B cell (primary cell): ENCODE measurements at regions of chr19 and their contacts with region 1.

Region 1: GRCh38 chr19:45001087-45001739 is at the start of gene RELB:
- DNase-seq: peak; percentile 96
- ATAC-seq: peak; percentile 48
- H3K4me3 ChIP-seq: peak within 1 kb of the TSS in 4 of 5 experiments; percentile 75 to 95 (median 82)
- H3K4me3 Mint-ChIP-seq: peak within 1 kb of the TSS; percentile 96
- H3K27ac ChIP-seq: peak within 1 kb of the TSS; percentile 100
- H3K27ac Mint-ChIP-seq: peak within 1 kb of the TSS; percentile 97
- H3K4me1 ChIP-seq: peaks cover 13 to 15% of the 10 kb centered on the region in 2 donors
- H3K4me1 Mint-ChIP-seq: peaks cover 32% of the 10 kb centered on the region
- H3K27me3 ChIP-seq: no peaks in the 10 kb centered on the region
- H3K27me3 Mint-ChIP-seq: no peaks in the 10 kb centered on the region
- CTCF ChIP-seq: no peak
- total RNA-seq, gene RELB: 106 and 111 TPM in 2 replicates

Region 2: DNA sequence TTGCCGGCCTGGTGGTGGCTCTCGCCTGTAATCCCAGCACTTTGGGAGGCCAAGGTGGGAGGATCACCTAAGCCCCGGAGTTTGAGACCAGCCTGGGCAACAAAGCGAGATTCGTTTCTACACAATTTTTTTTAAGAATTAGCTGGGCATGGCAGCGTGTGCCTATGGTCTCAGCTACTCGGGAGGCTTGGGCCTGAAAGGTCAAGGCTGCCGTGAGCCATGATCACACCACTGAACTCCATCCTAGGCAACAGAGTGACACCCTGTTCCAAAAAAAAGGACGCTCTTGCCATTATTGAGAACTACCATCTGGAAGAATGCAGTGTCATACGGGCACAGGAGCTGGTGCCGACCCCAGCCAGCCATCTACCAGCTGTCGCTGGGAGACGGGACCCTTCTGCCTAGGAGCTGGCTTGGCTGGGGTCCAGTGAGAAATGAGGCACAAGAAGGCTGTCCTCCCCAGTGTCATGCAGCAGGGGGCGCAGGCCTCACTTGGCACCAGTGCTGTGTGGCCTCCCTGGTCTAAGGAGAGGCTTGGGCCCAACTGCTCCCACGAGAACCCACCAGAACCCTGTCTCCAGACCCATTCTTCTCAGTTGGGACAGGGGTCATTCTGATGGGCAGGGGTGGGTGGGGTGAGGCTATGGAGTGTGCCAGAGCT is 12.2 kb before region 1 on chr19:
- CTCF ChIA-PET with region 1: interaction called, 7 read pairs
- POLR2A ChIA-PET with region 1: interaction called, 10 read pairs
- intact Hi-C with region 1: no loop called
- DNase-seq: peak; percentile 78
- ATAC-seq: peak; percentile 86
- H3K4me3 ChIP-seq: no peak overlapping the region
- H3K4me3 Mint-ChIP-seq: no peak overlapping the region
- H3K27ac ChIP-seq: no peak overlapping the region
- H3K27ac Mint-ChIP-seq: peak overlapping the region; percentile 65
- H3K4me1 ChIP-seq: no peaks in the 10 kb centered on the region
- H3K4me1 Mint-ChIP-seq: peaks cover 4% of the 10 kb centered on the region
- H3K27me3 ChIP-seq: no peaks in the 10 kb centered on the region
- H3K27me3 Mint-ChIP-seq: no peaks in the 10 kb centered on the region
- CTCF ChIP-seq: peak; percentile 73

Region 3: DNA sequence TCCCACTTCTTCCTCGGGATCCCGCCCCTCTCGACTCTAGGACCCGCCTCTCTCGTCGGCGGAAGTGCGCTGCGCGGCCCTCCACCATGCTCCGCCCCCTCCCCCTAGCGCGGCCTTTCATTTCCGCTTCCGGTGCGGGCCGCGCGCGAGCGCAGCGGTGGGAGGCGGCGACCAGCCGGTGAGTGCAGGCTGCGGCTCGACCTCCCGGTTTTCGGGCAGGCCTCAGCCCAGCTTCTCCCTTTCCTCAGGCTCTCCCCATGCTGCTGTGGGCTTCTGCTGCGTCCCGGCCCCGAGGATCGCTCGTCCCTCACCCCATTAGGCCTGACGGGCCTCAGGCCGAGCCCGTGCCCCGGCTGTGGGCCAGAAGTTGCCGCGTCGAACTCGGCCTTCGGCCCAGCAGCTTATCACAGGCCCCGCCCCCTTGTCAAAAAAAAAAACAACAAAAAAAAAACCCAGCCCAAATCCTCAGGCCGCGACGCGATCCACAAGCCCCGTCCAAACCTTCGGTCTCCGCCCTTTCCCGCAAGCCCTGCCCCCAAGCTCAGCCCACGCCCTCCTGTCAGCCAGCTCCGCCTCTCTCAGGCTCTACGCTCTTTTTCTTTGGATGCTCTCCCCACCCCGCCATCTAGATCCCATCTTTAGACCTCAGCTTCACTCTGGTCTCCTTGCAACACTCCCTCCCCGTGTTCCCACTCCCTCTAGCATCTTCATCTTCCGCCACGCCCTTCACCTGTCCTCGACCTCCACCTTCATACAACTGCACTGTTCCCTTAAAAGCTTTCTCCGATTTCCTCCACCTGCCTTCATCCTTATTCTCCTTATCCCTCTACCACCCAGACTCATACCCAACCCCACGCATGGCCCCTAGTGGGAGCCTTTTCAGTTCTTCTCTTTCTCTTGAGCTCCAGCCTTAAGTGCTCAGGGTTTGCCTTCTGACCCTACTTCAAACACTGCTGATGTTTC is 38.0 kb after region 1 on chr19 and contains the start of gene CLASRP:
- CTCF ChIA-PET with region 1: interaction called, 3 read pairs
- POLR2A ChIA-PET with region 1: interaction called, 10 read pairs
- intact Hi-C with region 1: loop called (anchors 1 kb)
- DNase-seq: peak; percentile 93
- ATAC-seq: peak; percentile 89
- H3K4me3 ChIP-seq: peak within 1 kb of the TSS; percentile 51 to 96 (median 94)
- H3K4me3 Mint-ChIP-seq: peak within 1 kb of the TSS; percentile 96
- H3K27ac ChIP-seq: peak within 1 kb of the TSS; percentile 93 to 96
- H3K27ac Mint-ChIP-seq: peak within 1 kb of the TSS; percentile 96
- H3K4me1 ChIP-seq: peaks cover 26 to 35% of the 10 kb centered on the region in 2 donors
- H3K4me1 Mint-ChIP-seq: peaks cover 40% of the 10 kb centered on the region
- H3K27me3 ChIP-seq: no peaks in the 10 kb centered on the region
- H3K27me3 Mint-ChIP-seq: no peaks in the 10 kb centered on the region
- CTCF ChIP-seq: no peak
- total RNA-seq, gene CLASRP: 277 and 285 TPM in 2 replicates

Region 4: GRCh38 chr19:45079063-45079910 is 78.1 kb after region 1 on chr19 and contains the start of gene GEMIN7:
- CTCF ChIA-PET with region 1: no interaction called
- POLR2A ChIA-PET with region 1: interaction called, 12 read pairs
- intact Hi-C with region 1: loop called (anchors 1 kb)
- DNase-seq: peak; percentile 86
- ATAC-seq: peak; percentile 15
- H3K4me3 ChIP-seq: peak within 1 kb of the TSS; percentile 71 to 98 (median 77)
- H3K4me3 Mint-ChIP-seq: peak within 1 kb of the TSS; percentile 98
- H3K27ac ChIP-seq: peak within 1 kb of the TSS; percentile 62 to 92
- H3K27ac Mint-ChIP-seq: peak within 1 kb of the TSS; percentile 94
- H3K4me1 ChIP-seq: peaks cover 40 to 49% of the 10 kb centered on the region in 2 donors
- H3K4me1 Mint-ChIP-seq: peaks cover 53% of the 10 kb centered on the region
- H3K27me3 ChIP-seq: no peaks in the 10 kb centered on the region
- H3K27me3 Mint-ChIP-seq: no peaks in the 10 kb centered on the region
- CTCF ChIP-seq: peak; percentile 11
- total RNA-seq, gene GEMIN7: 38.2 and 43.0 TPM in 2 replicates

Region 5: DNA sequence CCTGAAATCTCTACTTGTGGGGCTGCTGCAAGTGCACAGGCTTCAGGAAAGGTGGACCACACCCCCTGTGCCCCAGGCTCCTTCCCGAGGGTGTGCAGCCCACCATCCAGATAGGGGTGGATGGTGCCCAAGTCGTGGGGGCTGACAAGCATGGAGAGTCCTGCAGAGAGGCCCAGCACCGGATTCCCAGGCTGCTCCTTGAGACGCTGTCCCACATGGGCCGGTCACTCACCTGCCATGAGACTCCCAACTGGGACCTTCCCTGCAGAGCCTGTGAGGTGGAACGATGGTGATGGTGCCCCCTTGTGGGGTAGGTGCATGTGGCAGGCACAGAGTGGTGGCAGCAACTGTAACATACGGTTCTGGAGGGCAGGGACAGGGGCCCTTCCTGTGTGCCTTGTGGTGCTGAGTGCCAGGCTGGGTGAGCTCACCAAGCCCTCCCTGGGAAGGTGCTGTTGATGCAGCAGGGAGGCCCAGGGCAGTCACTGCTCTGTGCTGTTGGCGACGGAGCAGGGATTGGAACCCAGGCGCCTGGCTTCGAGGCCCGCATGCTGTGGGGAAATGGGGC is 124.8 kb after region 1 on chr19:
- CTCF ChIA-PET with region 1: no interaction called
- POLR2A ChIA-PET with region 1: no interaction called
- intact Hi-C with region 1: no loop called
- DNase-seq: peak; percentile 71
- ATAC-seq: peak; percentile 78
- H3K4me3 ChIP-seq: no peak overlapping the region
- H3K4me3 Mint-ChIP-seq: no peak overlapping the region
- H3K27ac ChIP-seq: no peak overlapping the region
- H3K27ac Mint-ChIP-seq: no peak overlapping the region
- H3K4me1 ChIP-seq: peaks cover 16 to 26% of the 10 kb centered on the region in 2 donors
- H3K4me1 Mint-ChIP-seq: peaks cover 43% of the 10 kb centered on the region
- H3K27me3 ChIP-seq: no peaks in the 10 kb centered on the region
- H3K27me3 Mint-ChIP-seq: no peaks in the 10 kb centered on the region
- CTCF ChIP-seq: peak; percentile 76

Region 6: DNA sequence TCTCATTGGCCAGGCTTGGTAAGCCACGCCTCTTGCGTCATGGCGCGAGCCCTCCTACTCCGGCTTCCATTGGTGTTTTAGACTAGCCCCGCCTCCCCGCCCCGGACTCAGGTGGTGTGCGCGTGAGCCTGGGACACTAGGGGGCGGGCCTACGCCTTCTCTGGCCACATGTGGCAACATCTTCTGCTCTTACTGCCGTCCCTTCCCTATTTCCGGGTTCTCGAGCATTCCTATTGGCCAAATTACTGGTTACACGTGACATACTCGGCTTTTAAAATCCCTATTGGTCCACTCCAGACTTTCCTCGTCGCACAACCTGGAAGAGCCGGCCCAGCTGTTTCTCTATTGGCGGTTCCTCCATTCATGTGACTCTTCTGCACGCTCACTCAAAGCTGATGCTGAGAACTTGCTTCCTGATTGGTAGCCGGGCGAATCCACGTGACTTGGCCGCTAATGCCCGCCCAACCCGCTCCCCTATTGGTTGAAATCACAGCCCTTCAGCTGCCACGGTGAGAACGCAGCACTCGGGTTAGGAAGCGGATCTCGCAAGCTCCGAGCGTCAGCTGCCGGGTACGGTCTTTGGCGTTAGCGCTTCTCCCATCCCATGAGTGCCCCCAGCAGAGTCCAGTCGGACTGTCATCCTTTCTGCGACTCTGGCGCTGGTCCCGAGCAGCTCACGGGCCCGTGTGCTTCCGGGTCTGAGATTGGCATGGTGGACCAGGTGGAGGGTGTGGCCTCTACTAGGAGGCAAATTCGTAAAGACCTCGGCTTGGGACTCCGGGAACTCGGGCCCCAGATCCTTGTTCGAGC is 177.3 kb after region 1 on chr19 and contains the start of gene BLOC1S3:
- CTCF ChIA-PET with region 1: no interaction called
- POLR2A ChIA-PET with region 1: interaction called, 4 read pairs
- intact Hi-C with region 1: loop called (anchors 1 kb)
- DNase-seq: peak; percentile 100
- ATAC-seq: peak; percentile 88
- H3K4me3 ChIP-seq: peak within 1 kb of the TSS; percentile 93 to 99 (median 95)
- H3K4me3 Mint-ChIP-seq: peak within 1 kb of the TSS; percentile 95
- H3K27ac ChIP-seq: peak within 1 kb of the TSS; percentile 86 to 91
- H3K27ac Mint-ChIP-seq: peak within 1 kb of the TSS; percentile 96
- H3K4me1 ChIP-seq: peaks cover 24 to 35% of the 10 kb centered on the region in 2 donors
- H3K4me1 Mint-ChIP-seq: peaks cover 39% of the 10 kb centered on the region
- H3K27me3 ChIP-seq: no peaks in the 10 kb centered on the region
- H3K27me3 Mint-ChIP-seq: no peaks in the 10 kb centered on the region
- CTCF ChIP-seq: peak; percentile 38
- total RNA-seq, gene BLOC1S3: 21.1 and 31.8 TPM in 2 replicates